Common myeloid progenitor, CD34-positive (primary cell): ENCODE measurements at regions of chr14 and their contacts with region 1.

Region 1: GRCh38 chr14:70186900-70187451 is 1.8 kb downstream of the SLC8A3 start:
- DNase-seq: peak; percentile 84 to 94 (median 91)
- H3K4me3 ChIP-seq: peak overlapping the region; percentile 58 to 97 (median 86)
- H3K27ac ChIP-seq: peak overlapping the region; percentile 77 to 89
- H3K4me1 ChIP-seq: peaks cover 10 to 76% (median 49%) of the 10 kb centered on the region in 4 experiments
- H3K27me3 ChIP-seq: no peaks in the 10 kb centered on the region

Region 2: GRCh38 chr14:70254476-70254961 is 67.5 kb after region 1 on chr14:
- CTCF ChIA-PET with region 1: interaction called, 5 read pairs
- POLR2A ChIA-PET with region 1: interaction called, 11 read pairs
- DNase-seq: peak; percentile 47 to 78 (median 65)
- H3K4me3 ChIP-seq: peak overlapping the region; percentile 13 to 78 (median 60)
- H3K27ac ChIP-seq: no peak overlapping the region
- H3K4me1 ChIP-seq: peaks cover 0 to 8% (median 3%) of the 10 kb centered on the region in 4 experiments
- H3K27me3 ChIP-seq: peaks cover 0 to 3% (median 0%) of the 10 kb centered on the region in 5 experiments